ENCODE measurements at regions of chr11 and their contacts with region 1.

Region 1: DNA sequence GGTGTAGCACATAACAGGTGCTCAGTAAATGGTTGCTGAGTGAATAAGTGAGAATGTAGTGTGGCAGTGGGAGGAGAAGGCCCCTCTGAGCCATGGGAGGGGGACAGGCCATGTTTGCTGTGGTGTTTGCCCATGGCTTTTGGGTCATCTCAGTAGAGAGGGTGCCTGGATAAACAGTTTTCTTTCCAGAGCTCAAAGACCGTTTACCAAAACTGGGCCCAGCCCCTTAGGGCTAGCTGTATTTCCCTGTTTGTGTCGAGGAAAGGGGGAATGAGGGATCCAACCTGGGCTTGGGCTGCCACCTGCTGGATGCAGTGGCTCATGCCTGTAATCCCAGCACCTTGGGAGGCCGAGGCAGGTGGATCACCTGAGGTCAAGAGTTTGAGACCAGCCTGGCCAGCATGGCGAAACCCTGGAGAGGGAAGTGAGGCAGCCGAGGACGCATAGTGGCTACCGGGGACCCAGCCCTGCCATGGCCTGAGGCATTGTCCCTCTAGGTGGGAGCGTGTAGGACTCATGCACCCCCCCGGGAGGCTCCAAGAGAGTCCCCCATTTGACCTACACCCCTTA is 8.7 kb upstream of the LTO1 start:
- DNase-seq: no peak
- H3K4me3 ChIP-seq: no peak overlapping the region
- H3K27ac ChIP-seq: no peak overlapping the region
- H3K4me1 ChIP-seq: peaks cover 1% of the 10 kb centered on the region
- H3K27me3 ChIP-seq: no peaks in the 10 kb centered on the region
- CTCF ChIP-seq: no peak
- EP300 ChIP-seq: no peak
- POLR2A ChIP-seq: no peak

Region 2: DNA sequence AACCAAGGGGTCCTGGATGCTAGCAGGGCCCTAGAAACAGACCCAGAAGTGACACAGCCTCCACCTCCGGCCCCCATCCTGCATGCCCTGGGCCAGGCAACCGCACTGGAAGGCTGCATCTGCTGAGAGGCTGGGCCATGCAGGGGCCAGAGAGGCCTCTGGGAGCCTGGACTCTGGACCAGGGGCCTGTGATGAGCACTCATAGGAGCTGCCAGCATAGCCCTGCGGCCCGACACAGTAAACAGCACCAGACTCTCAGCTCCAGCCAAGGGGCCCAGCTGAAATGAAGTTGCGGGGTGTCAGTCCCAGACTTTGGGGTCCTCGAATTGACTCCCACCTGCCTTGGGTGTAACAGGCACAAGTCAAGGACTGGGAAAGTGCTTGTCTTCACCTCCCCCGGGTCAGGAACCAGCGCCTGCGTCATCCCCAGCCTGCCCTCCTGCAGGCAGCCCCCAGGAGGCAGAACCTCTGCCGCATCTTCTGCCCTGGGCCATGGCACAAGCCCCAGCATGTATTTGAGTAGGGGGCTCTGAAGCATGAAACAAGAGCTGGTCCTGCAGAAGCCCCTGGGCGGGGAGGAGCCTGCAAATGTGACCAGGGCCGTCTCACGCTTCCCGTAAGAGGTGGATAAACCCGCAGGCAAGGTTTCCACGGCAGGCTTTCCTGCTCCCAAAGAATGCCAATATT is 68.1 kb before region 1 on chr11:
- intact Hi-C with region 1: no loop called
- DNase-seq: no peak
- H3K4me3 ChIP-seq: no peak overlapping the region
- H3K27ac ChIP-seq: no peak overlapping the region
- H3K4me1 ChIP-seq: no peaks in the 10 kb centered on the region
- H3K27me3 ChIP-seq: no peaks in the 10 kb centered on the region
- CTCF ChIP-seq: no peak
- EP300 ChIP-seq: no peak
- POLR2A ChIP-seq: no peak

Region 3: DNA sequence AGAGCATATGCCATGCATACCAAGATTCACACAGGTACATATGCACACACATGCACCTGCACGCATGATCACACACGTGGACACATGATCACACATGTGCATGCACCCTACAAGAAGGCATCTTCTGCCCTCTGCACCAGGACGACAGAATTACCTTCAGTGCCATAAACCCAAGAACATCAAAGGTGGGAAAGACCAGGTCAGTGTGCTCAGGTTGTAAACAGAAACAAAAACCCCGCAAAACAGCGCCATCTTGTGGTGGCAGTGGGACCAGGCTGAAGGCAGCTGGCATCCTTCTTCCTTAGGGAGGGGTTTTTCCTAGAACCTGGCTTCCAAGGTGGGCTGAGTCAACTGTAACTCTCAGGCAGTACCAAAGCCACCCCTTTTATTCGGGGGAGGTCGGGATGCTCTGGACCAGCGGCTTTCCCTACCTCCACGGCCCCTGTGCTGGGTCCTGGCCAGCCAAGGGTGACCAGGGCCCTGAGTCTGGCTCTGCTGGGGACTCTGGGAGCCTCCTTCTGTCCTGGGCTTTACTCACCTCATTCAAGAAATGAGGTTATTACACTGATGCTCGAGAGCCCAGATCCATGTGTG is 204.7 kb after region 1 on chr11:
- intact Hi-C with region 1: loop called in 1 of 4 experiments (anchors 10 kb)
- DNase-seq: peak in 4 of 5 donors; percentile 31 to 63 (median 38)
- H3K4me3 ChIP-seq: no peak overlapping the region
- H3K27ac ChIP-seq: no peak overlapping the region
- H3K4me1 ChIP-seq: no peaks in the 10 kb centered on the region
- H3K27me3 ChIP-seq: no peaks in the 10 kb centered on the region
- CTCF ChIP-seq: peak in 1 of 3 donors; percentile 36
- EP300 ChIP-seq: no peak
- POLR2A ChIP-seq: no peak

Region 4: DNA sequence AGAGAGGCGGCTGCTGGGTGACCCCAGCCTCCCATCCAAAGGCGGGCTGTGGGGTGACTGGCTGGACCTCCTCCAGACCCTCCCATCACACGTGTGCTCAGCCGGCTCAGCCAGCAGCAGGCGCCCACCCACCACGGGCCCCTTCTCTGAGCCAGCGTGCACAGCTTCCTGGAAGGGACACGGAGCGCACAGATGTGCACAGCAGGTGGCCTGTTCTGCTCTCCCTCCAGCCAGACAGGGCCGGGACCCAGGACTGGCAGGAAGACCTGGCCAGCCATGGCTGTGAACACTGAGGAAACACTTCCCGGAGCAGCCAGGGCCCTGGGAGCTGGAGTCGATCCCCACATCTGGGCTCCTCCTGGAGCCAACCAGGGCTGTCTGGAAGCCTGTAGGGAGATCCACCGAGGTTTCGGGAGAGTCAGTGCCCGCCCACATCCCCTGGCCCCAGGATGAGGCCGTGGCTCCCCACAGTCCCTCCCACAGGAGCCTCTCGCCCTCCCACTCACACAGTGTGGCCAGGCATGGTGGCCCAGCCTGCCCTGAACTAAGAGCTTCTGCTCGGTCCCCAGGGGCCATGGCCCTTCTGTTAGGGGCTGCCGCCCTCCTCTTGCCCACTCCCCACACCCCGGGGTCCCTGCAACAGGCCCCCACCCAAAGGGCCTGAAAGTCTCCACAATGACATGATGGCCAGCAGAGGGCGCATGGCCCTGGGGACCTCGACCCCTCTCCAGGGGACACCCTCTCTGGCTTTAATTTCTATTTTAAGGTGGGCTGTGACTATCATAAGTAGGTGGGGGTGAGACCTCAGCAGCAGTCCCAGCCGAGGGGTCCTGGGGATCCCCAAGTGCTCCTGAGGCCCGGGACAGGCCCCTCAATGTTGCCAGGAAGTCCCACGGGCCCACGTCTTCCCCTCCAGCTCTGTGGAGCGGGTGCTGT is 226.0 kb after region 1 on chr11:
- intact Hi-C with region 1: loop called in 1 of 4 experiments (anchors 5 kb)
- DNase-seq: peak in 1 of 5 donors; percentile 35
- H3K4me3 ChIP-seq: no peak overlapping the region
- H3K27ac ChIP-seq: no peak overlapping the region
- H3K4me1 ChIP-seq: no peaks in the 10 kb centered on the region
- H3K27me3 ChIP-seq: no peaks in the 10 kb centered on the region
- CTCF ChIP-seq: peak in 1 of 3 donors; percentile 10
- EP300 ChIP-seq: no peak
- POLR2A ChIP-seq: no peak